Transverse colon (tissue), 4 donors: ENCODE measurements at regions of chr21 and their contacts with region 1.

Region 1: DNA sequence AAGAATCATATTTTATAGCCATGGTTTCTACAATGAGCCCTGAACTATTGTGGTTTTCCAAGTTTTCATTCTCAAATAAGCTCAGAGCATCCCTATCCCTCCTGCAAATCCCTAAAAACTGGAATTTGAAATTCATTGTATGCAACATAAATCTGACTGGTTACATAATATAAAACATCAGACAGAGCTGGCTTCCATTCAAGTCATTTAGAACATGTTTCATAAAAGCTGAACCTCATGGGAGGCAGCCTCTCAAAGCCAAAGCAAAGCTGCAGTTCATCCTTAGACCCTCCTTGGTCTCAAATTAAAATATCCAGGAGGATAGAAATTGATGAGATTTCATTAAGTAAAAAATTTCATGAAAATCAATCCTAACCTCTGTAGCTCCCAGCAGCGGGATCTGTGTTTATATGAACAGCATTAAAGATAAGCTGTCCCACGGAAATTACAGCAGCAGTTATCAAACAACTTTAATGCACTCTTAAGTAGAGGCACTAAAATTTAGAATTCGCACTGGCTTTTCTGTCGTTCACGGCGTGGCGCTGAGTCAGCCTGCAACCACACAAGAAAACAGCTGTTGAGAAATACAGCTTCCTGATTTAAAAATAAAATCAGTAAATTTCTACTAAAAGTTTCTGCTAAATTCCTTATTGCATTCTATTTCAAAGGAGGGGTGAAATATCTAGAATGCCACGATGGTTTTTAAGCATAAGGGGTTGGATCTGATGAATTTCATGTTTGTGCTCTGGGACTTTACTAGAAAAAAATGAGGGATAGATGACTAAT is 99.9 kb upstream of the TIAM1 start:
- DNase-seq: no peak
- H3K4me3 ChIP-seq: no peak overlapping the region
- H3K27ac ChIP-seq: no peak overlapping the region
- H3K4me1 ChIP-seq: peaks cover 0 to 4% (median 0%) of the 10 kb centered on the region in 4 donors
- H3K27me3 ChIP-seq: no peaks in the 10 kb centered on the region
- CTCF ChIP-seq: no peak
- EP300 ChIP-seq: no peak
- POLR2A ChIP-seq: no peak

Region 2: DNA sequence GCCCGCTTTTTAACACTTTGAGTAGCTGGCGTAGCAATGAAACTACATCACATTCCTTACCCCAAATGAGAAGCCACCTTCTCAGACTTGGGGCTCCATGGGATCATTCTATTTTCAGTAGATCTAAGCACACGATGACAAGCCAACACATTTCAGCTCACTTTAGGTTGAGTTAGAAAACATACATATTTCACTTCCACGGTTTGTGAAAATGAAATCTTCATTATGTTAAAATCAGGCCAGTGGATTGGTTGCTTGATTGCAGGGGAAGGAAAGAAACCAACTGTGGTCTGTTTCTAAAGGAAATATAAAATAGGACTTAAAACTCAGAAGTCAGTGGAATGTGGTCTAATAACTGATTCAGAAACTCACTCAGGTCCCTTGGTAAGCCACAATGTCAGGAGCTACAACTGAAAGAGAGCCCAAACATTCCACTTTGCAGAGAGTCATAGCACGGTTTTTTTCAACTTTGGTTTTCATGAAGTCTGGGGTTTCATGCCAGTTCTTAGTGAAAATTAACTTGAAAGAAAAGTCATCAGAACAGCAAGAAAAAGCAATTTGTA is 17.6 kb before region 1 on chr21:
- in situ Hi-C with region 1: no loop called
- intact Hi-C with region 1: no loop called
- DNase-seq: no peak
- H3K4me3 ChIP-seq: no peak overlapping the region
- H3K27ac ChIP-seq: no peak overlapping the region
- H3K4me1 ChIP-seq: no peaks in the 10 kb centered on the region
- H3K27me3 ChIP-seq: no peaks in the 10 kb centered on the region
- CTCF ChIP-seq: no peak
- EP300 ChIP-seq: no peak
- POLR2A ChIP-seq: no peak

Region 3: GRCh38 chr21:33162436-33162951 is 1718.6 kb after region 1 on chr21:
- in situ Hi-C with region 1: no loop called
- intact Hi-C with region 1: loop called (anchors 10 kb)
- DNase-seq: no peak
- H3K4me3 ChIP-seq: no peak overlapping the region
- H3K27ac ChIP-seq: no peak overlapping the region
- H3K4me1 ChIP-seq: no peaks in the 10 kb centered on the region
- H3K27me3 ChIP-seq: peaks cover 13% of the 10 kb centered on the region
- CTCF ChIP-seq: no peak
- EP300 ChIP-seq: no peak
- POLR2A ChIP-seq: no peak